H1 (cell line): ENCODE measurements at regions of chr1 and their contacts with region 1.

Region 1: DNA sequence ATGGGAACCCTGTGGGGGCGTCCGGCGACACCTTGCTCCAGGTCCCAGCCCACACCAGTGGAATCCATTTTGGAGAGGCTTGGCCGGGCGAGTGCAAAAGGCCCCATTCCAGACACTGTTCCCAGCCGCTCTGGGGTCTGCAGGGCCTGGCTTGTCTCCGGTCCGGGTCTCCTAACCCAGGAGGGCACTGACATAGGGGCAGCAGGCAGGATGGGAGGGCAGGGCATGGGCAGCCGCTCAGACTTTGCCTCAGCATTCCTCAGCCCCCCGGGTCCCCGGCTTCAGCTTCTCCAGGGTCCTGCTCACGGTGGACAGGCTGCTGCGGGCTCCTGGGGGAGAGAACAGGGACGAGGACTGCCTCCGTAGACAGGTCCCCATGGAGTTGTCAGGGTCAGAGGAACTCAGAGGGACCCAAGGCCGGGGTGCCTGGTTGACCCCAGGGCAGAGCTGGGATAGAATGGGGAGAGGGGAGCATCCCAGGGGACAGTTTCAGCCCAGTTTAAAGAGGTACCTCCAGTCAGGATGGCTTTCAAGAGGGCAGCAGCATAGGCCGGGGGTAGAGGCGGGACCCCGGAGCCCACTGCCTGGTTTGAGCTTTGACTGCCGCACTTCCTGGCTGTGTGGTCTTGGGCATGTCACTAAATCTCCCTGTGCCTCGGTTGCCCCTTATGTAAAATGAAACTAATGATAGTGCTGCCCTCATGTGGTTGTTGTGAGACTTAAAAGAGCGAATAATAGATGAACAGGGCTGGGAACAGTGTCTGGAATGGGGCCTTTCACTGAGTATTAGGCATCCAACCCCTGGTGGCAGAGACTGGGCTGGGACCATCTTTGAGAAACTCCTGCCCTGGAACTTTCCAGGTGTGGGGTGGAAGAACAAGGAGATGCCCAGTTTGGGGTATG is 3.7 kb downstream of the KNCN start:
- DNase-seq: no peak
- H3K4me3 ChIP-seq: no peak overlapping the region
- H3K27ac ChIP-seq: no peak overlapping the region
- H3K4me1 ChIP-seq: peaks cover 0 to 30% (median 19%) of the 10 kb centered on the region in 4 experiments; a peak in 6 of 7 replicates
- H3K27me3 ChIP-seq: peaks cover 27 to 44% (median 41%) of the 10 kb centered on the region in 4 experiments
- CTCF ChIP-seq: peak in 2 of 3 experiments; percentile 65 to 66; a peak in 3 of 4 replicates
- EP300 ChIP-seq: no peak
- POLR2A ChIP-seq: no peak
- RAD21 ChIP-seq: peak; percentile 60 to 70

Region 2: GRCh38 chr1:46130121-46130520 is 417.6 kb before region 1 on chr1:
- CTCF ChIA-PET with region 1: no interaction called
- POLR2A ChIA-PET with region 1: no interaction called
- DNase-seq: no peak
- H3K4me3 ChIP-seq: peak overlapping the region in 3 of 4 experiments; percentile 58 to 89 (median 69); a peak in 4 of 8 replicates
- H3K27ac ChIP-seq: no peak overlapping the region
- H3K4me1 ChIP-seq: peaks cover 0 to 6% (median 4%) of the 10 kb centered on the region in 4 experiments; a peak in 5 of 7 replicates
- H3K27me3 ChIP-seq: no peaks in the 10 kb centered on the region
- CTCF ChIP-seq: no peak
- EP300 ChIP-seq: no peak
- POLR2A ChIP-seq: no peak
- RAD21 ChIP-seq: no peak

Region 3: DNA sequence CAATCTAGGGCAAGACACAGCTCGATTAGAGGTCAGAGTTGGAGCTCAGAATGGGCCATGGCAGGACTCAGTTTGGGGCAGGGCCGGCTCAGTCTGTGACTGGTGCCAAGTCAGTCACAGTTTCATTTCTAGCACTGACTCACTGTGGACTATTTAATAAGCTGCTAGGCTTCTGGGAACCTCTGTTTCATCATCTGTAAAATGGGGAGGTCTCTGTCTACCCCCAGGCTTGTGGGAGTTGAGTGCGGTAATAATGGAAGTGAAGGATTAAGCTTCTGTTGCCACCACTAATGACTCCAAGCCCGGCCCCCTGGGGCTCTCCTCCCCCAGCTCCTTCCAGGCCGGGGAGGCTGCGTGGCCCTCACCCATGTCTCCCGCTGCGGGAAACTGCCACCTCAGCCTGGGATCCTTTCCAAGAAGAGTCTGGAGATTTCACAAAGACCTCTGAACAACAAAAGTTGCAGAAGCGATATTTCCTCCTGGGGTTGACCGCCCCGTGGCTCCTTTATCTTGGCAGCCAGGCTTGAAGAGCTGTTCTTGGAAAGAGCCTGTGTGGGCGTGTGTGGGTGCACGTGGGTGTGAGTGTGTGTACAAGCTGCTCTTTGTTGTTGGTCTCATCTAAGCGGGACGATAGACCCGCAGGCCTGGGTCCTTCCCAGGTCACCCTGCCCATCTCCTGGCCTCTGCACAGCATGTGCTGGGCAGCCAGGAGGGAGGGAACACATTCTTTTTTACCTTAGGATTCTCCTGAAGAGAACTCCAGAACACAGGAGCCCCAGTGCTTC is 25.4 kb before region 1 on chr1:
- CTCF ChIA-PET with region 1: interaction called, 322 read pairs
- POLR2A ChIA-PET with region 1: no interaction called
- DNase-seq: peak in 1 of 2 experiments; percentile 45
- H3K4me3 ChIP-seq: no peak overlapping the region
- H3K27ac ChIP-seq: no peak overlapping the region
- H3K4me1 ChIP-seq: peaks cover 24 to 53% (median 34%) of the 10 kb centered on the region in 4 experiments
- H3K27me3 ChIP-seq: peaks cover 9 to 47% (median 42%) of the 10 kb centered on the region in 4 experiments
- CTCF ChIP-seq: no peak
- EP300 ChIP-seq: no peak
- POLR2A ChIP-seq: no peak
- RAD21 ChIP-seq: no peak

Region 4: GRCh38 chr1:46569884-46570725 is 22.4 kb after region 1 on chr1:
- CTCF ChIA-PET with region 1: interaction called, 12 read pairs
- POLR2A ChIA-PET with region 1: no interaction called
- DNase-seq: no peak
- H3K4me3 ChIP-seq: no peak overlapping the region
- H3K27ac ChIP-seq: no peak overlapping the region
- H3K4me1 ChIP-seq: peaks cover 1 to 5% (median 2%) of the 10 kb centered on the region in 4 experiments; a peak in 5 of 7 replicates
- H3K27me3 ChIP-seq: no peaks in the 10 kb centered on the region
- CTCF ChIP-seq: no peak
- EP300 ChIP-seq: no peak
- POLR2A ChIP-seq: no peak
- RAD21 ChIP-seq: no peak